Activated B cell treated with CpG ODN at 0.5 μM for 24 hours (primary cell): ENCODE measurements at regions of chr19 and their contacts with region 1.

Region 1: GRCh38 chr19:45515081-45515624 is 7.9 kb downstream of the VASP start:
- DNase-seq: peak; percentile 62
- ATAC-seq: peak; percentile 79
- H3K4me3 Mint-ChIP-seq: peak overlapping the region; percentile 67
- H3K27ac Mint-ChIP-seq: peak overlapping the region; percentile 92
- H3K4me1 Mint-ChIP-seq: peaks cover 67% of the 10 kb centered on the region
- H3K27me3 Mint-ChIP-seq: no peaks in the 10 kb centered on the region
- CTCF ChIP-seq: no peak

Region 2: GRCh38 chr19:45542234-45542668 is 27.1 kb after region 1 on chr19:
- CTCF ChIA-PET with region 1: no interaction called
- POLR2A ChIA-PET with region 1: no interaction called
- intact Hi-C with region 1: no loop called
- DNase-seq: no peak
- ATAC-seq: no peak
- H3K4me3 Mint-ChIP-seq: no peak overlapping the region
- H3K27ac Mint-ChIP-seq: no peak overlapping the region
- H3K4me1 Mint-ChIP-seq: peaks cover 16% of the 10 kb centered on the region
- H3K27me3 Mint-ChIP-seq: no peaks in the 10 kb centered on the region
- CTCF ChIP-seq: no peak

Region 3: DNA sequence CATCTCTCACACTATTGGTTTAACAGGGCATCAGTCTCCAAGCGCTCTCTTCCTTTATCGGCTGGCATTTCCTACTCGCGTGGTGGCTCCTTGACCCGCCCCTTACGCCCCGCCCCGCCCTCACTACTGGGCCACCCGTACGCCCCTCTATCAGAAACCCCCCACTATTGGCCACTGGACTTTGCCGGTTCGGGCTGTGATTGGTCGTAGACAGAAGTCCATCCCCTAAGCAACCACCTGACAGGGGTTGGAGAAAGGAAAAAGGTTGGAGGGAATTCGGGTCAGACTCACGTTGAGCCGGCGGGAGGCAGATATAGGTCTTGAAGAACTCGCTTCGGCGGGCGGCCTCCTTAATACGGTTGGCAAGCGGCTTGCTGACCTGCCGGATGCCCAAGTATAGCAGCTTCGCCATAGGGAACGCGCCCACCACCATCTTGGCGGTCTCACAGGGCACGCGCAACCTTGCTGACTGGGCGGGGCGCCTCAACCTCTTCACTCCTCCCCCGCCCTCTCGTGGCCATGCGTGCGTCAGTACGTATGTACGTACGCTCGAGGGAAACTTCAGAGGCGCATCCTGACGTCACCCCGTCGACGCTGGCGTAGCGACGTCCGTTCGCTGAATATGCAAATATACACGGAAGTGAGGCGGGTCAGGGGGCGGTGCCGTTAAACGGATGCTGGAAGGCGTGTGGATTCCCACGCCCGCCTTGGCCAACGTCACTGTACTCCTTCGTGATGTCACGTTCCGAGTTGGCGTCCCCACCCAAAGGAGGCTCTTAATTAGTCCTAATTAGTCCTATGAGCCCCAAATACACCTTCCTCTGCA is 69.4 kb after region 1 on chr19 and contains the start of gene OPA3:
- CTCF ChIA-PET with region 1: no interaction called
- POLR2A ChIA-PET with region 1: interaction called, 4 read pairs
- intact Hi-C with region 1: loop called (anchors 2 kb)
- DNase-seq: peak; percentile 94
- ATAC-seq: peak; percentile 89
- H3K4me3 Mint-ChIP-seq: peak within 1 kb of the TSS; percentile 96
- H3K27ac Mint-ChIP-seq: peak within 1 kb of the TSS; percentile 98
- H3K4me1 Mint-ChIP-seq: peaks cover 13% of the 10 kb centered on the region
- H3K27me3 Mint-ChIP-seq: peaks cover 5% of the 10 kb centered on the region
- CTCF ChIP-seq: no peak
- total RNA-seq, gene OPA3: 12.0 and 14.4 TPM in 2 replicates